Naive thymus-derived CD4-positive, alpha-beta T cell (primary cell): ENCODE measurements at regions of chr14 and their contacts with region 1.

Region 1: DNA sequence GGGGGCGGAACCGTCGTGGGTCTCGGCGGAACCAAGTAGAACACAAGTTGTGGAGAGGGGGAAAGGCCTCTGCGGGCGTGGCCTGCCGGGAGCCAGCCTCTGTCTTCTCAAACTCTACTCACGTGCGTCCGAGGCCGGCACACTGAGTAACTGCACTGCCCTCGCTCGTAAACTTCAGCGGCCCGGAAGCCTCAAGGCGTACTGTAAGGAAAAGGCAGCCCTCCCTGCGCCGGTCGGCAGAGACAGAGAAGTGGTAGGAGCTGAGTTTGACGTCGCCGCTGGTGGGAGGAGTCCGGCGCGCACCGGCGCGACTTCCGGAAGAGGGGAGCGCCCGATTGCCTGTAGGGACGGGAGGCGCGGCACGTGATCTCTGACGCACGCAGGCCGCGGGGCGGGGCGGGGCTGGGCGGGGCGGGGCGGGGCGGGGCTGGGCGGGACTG is at the start of gene FBXO33:
- DNase-seq: peak; percentile 93 to 99 (median 98)
- ATAC-seq: peak; percentile 89
- H3K4me3 ChIP-seq: peak within 1 kb of the TSS; percentile 98
- H3K4me3 Mint-ChIP-seq: peak within 1 kb of the TSS; percentile 99 to 100 (median 100)
- H3K27ac ChIP-seq: peak within 1 kb of the TSS; percentile 99
- H3K27ac Mint-ChIP-seq: peak within 1 kb of the TSS; percentile 100
- H3K4me1 ChIP-seq: peaks cover 26 to 34% of the 10 kb centered on the region in 2 donors
- H3K4me1 Mint-ChIP-seq: peaks cover 33 to 50% (median 43%) of the 10 kb centered on the region in 7 donors
- H3K27me3 ChIP-seq: no peaks in the 10 kb centered on the region
- H3K27me3 Mint-ChIP-seq: peaks cover 0 to 2% (median 0%) of the 10 kb centered on the region in 5 donors
- total RNA-seq, gene FBXO33: 16.5 to 68.2 (median 27.9) TPM

Region 2: DNA sequence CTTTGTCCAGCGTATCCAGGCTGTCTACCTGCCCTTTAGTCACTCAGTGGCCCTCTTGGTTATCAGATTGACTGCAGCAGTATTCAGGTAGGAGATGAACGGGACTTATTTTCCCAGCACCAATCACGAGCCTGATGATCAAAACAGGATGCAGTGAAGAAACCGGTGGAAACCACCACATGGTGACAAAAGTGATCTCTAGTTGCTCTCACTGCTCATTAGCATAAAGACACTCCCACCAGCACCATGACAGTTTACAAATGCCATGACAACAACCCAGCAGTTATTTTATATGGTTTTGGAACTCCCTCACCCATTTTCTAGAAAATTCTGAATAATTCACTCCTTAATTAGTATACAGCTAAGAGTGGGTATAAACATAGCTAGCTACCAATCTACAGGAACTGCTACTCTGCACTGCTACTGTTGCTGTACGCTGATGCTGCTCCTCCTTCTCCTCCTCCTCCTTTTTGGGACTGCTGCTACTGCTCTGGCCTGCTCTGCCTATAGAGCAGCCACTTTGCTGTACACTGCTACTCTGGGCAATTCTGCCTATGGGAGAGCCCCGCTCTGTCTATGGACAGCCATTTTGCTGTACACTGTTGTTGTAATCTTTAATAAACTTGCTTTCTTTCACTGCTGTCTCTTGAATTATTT is 1367.0 kb before region 1 on chr14:
- CTCF ChIA-PET with region 1: no interaction called
- POLR2A ChIA-PET with region 1: no interaction called
- intact Hi-C with region 1: loop called (anchors 2 to 10 kb)
- DNase-seq: peak; percentile 8 to 90 (median 84)
- ATAC-seq: peak; percentile 98
- H3K4me3 ChIP-seq: peak overlapping the region; percentile 43
- H3K4me3 Mint-ChIP-seq: peak overlapping the region; percentile 62 to 84 (median 74)
- H3K27ac ChIP-seq: peak overlapping the region; percentile 89
- H3K27ac Mint-ChIP-seq: peak overlapping the region; percentile 88 to 98 (median 96)
- H3K4me1 ChIP-seq: peaks cover 12 to 17% of the 10 kb centered on the region in 2 donors
- H3K4me1 Mint-ChIP-seq: peaks cover 14 to 62% (median 44%) of the 10 kb centered on the region in 7 donors
- H3K27me3 ChIP-seq: no peaks in the 10 kb centered on the region
- H3K27me3 Mint-ChIP-seq: peaks cover 0 to 4% (median 0%) of the 10 kb centered on the region in 5 donors

Region 3: DNA sequence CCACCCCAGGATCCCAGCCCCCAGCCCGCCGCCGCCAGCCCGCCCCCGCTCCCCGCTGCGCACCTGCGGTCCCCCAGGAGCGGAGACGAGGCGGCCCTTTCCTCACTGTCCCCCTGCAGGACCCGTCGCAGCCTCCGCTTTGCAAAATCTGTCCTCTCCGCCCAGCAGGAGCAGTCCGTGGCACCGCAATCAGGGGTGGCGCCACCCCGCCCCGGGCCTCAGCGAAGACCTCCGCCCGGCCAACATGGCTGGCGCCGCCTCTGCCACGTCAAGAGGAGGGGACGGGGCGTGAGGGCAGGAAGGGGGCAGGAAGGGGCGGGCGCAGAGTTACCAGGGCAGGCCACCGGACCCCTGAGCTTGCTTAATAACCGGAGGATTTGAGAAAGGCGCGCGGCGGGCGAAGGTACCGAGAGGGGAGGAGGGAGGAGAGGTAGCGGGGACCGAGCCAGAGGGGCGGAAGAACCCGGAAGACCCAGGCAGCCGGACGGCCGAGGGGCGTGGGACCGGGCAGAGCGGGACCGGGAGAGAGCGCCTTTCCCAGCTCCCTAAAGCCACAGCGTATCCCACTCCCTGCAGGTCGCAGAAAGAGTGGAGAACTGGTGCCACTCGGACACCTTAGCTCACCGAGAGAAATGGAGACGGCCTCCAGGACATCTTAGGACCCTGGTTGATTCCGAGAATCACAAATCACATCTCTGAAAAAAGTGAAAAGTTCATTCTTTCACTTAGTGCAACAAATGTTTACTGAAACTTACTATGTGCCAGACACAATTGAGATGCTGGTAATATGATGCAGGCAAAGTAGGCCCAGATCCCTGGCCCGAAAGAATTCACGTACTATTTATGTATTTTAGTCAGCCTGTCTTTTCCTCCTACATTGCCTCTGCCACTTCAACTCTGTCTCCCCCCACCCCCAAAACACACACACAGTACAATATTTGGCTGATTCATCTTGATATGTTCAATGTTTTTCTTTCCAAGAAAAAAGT is 328.9 kb before region 1 on chr14 and contains the start of gene SEC23A:
- CTCF ChIA-PET with region 1: no interaction called
- POLR2A ChIA-PET with region 1: interaction called, 36 read pairs
- intact Hi-C with region 1: loop called (anchors 1 kb)
- DNase-seq: peak; percentile 63 to 85 (median 76)
- ATAC-seq: peak; percentile 98
- H3K4me3 ChIP-seq: peak within 1 kb of the TSS; percentile 87
- H3K4me3 Mint-ChIP-seq: peak within 1 kb of the TSS; percentile 72 to 99 (median 94)
- H3K27ac ChIP-seq: peak within 1 kb of the TSS; percentile 98
- H3K27ac Mint-ChIP-seq: peak within 1 kb of the TSS; percentile 95 to 99 (median 97)
- H3K4me1 ChIP-seq: peaks cover 9 to 10% of the 10 kb centered on the region in 2 donors
- H3K4me1 Mint-ChIP-seq: peaks cover 24 to 52% (median 44%) of the 10 kb centered on the region in 7 donors
- H3K27me3 ChIP-seq: no peaks in the 10 kb centered on the region
- H3K27me3 Mint-ChIP-seq: no peaks in the 10 kb centered on the region
- total RNA-seq, gene SEC23A: 51.3 to 75.3 (median 68.9) TPM

Region 4: GRCh38 chr14:39169541-39169900 is 262.7 kb before region 1 on chr14:
- CTCF ChIA-PET with region 1: no interaction called
- POLR2A ChIA-PET with region 1: interaction called, 37 read pairs
- intact Hi-C with region 1: loop called (anchors 1 kb)
- DNase-seq: no peak
- ATAC-seq: no peak
- H3K4me3 ChIP-seq: peak overlapping the region; percentile 88
- H3K4me3 Mint-ChIP-seq: peak overlapping the region; percentile 88 to 100 (median 92)
- H3K27ac ChIP-seq: peak overlapping the region; percentile 98
- H3K27ac Mint-ChIP-seq: peak overlapping the region; percentile 90 to 99 (median 98)
- H3K4me1 ChIP-seq: peaks cover 20 to 31% of the 10 kb centered on the region in 2 donors
- H3K4me1 Mint-ChIP-seq: peaks cover 16 to 70% (median 59%) of the 10 kb centered on the region in 7 donors
- H3K27me3 ChIP-seq: no peaks in the 10 kb centered on the region
- H3K27me3 Mint-ChIP-seq: no peaks in the 10 kb centered on the region

Region 5: GRCh38 chr14:39229222-39229543 is 203.0 kb before region 1 on chr14:
- CTCF ChIA-PET with region 1: interaction called, 7 read pairs
- POLR2A ChIA-PET with region 1: interaction called, 5 read pairs
- intact Hi-C with region 1: loop called (anchors 1 kb)
- DNase-seq: peak in 8 of 9 donors; percentile 31 to 65 (median 54)
- ATAC-seq: peak; percentile 79
- H3K4me3 ChIP-seq: no peak overlapping the region
- H3K4me3 Mint-ChIP-seq: peak overlapping the region in 7 of 10 donors; percentile 3 to 58 (median 29)
- H3K27ac ChIP-seq: no peak overlapping the region
- H3K27ac Mint-ChIP-seq: peak overlapping the region; percentile 60 to 95 (median 84)
- H3K4me1 ChIP-seq: peaks cover 19 to 40% of the 10 kb centered on the region in 2 donors
- H3K4me1 Mint-ChIP-seq: peaks cover 20 to 52% (median 35%) of the 10 kb centered on the region in 7 donors
- H3K27me3 ChIP-seq: no peaks in the 10 kb centered on the region
- H3K27me3 Mint-ChIP-seq: no peaks in the 10 kb centered on the region

Region 6: DNA sequence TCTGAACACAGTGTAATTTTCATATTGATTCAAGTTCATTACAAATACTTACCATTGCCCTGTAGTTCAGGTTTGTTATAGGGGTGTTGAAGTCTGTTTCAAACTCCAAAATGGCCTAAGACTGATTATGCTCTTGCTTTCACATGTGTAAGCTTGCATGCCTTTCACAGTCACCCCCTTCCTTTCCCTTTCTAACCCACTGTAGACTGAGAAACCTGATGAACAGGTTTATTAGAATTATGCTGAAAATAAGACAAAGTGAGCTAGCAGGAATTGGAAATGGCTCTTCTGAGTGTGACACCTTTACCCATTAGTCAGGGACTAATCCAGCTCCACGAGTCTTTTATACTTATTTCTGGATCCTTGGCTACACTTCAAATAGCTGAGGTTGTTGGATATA is 38.9 kb before region 1 on chr14:
- CTCF ChIA-PET with region 1: no interaction called
- POLR2A ChIA-PET with region 1: interaction called, 11 read pairs
- intact Hi-C with region 1: no loop called
- DNase-seq: no peak
- ATAC-seq: no peak
- H3K4me3 ChIP-seq: no peak overlapping the region
- H3K4me3 Mint-ChIP-seq: no peak overlapping the region
- H3K27ac ChIP-seq: no peak overlapping the region
- H3K27ac Mint-ChIP-seq: no peak overlapping the region
- H3K4me1 ChIP-seq: no peaks in the 10 kb centered on the region
- H3K4me1 Mint-ChIP-seq: peaks cover 0 to 11% (median 0%) of the 10 kb centered on the region in 7 donors
- H3K27me3 ChIP-seq: no peaks in the 10 kb centered on the region
- H3K27me3 Mint-ChIP-seq: no peaks in the 10 kb centered on the region